K562 (cell line): ENCODE measurements at regions of chr3 and their contacts with region 1.

Region 1: DNA sequence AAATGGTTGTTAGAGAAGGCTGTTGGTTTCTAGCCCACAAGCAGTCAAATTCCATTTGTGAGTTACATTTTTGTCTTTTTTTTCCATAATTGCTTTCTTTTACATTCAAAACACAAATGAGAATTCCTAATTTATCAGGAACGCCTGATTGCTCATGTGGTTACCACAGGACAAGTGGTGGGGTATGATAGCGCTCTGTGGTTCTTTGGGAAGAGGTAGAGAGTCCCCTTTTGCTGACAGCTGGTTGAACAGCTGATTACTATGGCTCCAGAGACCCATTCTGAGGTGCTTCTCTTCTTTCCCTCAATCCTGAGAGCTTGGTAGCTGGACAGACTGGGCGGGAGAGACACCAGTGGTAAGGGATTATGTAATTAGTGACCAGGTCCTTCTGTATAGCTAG is 24.4 kb downstream of the CNOT10 start:
- DNase-seq: peak; percentile 68 to 88 (median 79)
- ATAC-seq: peak; percentile 88
- H3K4me3 ChIP-seq: no peak overlapping the region
- H3K27ac ChIP-seq: peak overlapping the region; percentile 63
- H3K4me1 ChIP-seq: peaks cover 15 to 42% of the 10 kb centered on the region in 2 experiments
- H3K27me3 ChIP-seq: no peaks in the 10 kb centered on the region
- CTCF ChIP-seq: no peak
- EP300 ChIP-seq: peak; percentile 95
- POLR2A ChIP-seq: no peak
- RAD21 ChIP-seq: peak; percentile 18 to 26; a peak in 2 of 4 replicates

Region 2: DNA sequence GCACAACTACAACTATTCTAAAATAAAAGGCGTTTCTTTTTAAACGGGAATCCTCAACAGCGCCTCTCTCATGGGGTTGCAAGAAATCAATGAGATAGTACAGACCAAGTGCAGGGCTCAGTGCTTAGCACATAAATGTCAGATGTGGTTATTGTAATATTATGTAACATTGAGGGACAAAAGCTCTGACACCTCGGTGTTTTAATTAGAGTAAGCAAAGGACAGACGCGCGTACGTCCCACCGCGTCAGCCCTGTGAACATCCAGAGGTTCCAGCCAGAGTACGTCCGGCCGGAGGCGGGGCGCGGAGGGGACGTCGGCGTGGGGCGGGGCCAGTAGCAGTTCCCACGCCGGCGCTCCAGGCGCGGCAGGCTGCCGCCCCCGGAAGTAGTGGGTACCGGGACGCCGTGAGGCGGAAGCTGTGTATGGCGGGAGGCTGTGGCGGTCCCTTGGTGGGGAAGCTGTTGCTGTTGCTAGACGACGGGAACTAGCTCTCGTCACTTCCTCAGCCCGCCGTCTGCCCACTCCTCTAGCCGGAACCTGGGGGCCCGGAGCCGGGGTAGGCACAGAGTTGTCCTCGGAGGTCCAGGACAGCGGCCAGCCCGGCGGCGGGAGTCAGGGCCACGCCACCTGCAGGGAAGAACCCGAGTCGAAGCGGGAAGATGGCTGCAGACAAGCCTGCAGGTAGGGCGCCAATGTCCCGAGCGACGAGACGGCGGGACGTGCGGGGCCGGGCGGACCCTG is 24.4 kb before region 1 on chr3 and contains the start of gene CNOT10:
- CTCF ChIA-PET with region 1: no interaction called
- POLR2A ChIA-PET with region 1: interaction called, 9 read pairs
- in situ Hi-C with region 1: no loop called
- intact Hi-C with region 1: loop called (anchors 2 kb)
- DNase-seq: peak; percentile 96 to 98 (median 96)
- ATAC-seq: peak; percentile 96
- H3K4me3 ChIP-seq: peak within 1 kb of the TSS; percentile 91
- H3K27ac ChIP-seq: peak within 1 kb of the TSS; percentile 82
- H3K4me1 ChIP-seq: peaks cover 11 to 20% of the 10 kb centered on the region in 2 experiments; a peak in 4 of 5 replicates
- H3K27me3 ChIP-seq: no peaks in the 10 kb centered on the region
- CTCF ChIP-seq: peak; percentile 14 to 28 (median 28); a peak in 2 of 6 replicates
- EP300 ChIP-seq: peak; percentile 25; the same call in 1 of the 2 replicates
- POLR2A ChIP-seq: peak; percentile 86
- RAD21 ChIP-seq: no peak; a peak in 2 of 4 replicates
- polyA plus RNA-seq, gene CNOT10: 35.7 to 52.2 TPM

Region 3: GRCh38 chr3:32698506-32698905 is 10.8 kb before region 1 on chr3:
- CTCF ChIA-PET with region 1: no interaction called
- POLR2A ChIA-PET with region 1: interaction called, 12 read pairs
- in situ Hi-C with region 1: no loop called
- intact Hi-C with region 1: no loop called
- DNase-seq: no peak
- ATAC-seq: no peak
- H3K4me3 ChIP-seq: no peak overlapping the region
- H3K27ac ChIP-seq: peak overlapping the region; percentile 13; the same call in 2 of the 3 replicates
- H3K4me1 ChIP-seq: peaks cover 9 to 37% of the 10 kb centered on the region in 2 experiments; a peak in 4 of 5 replicates
- H3K27me3 ChIP-seq: no peaks in the 10 kb centered on the region
- CTCF ChIP-seq: no peak
- EP300 ChIP-seq: no peak
- POLR2A ChIP-seq: no peak
- RAD21 ChIP-seq: no peak

Region 4: DNA sequence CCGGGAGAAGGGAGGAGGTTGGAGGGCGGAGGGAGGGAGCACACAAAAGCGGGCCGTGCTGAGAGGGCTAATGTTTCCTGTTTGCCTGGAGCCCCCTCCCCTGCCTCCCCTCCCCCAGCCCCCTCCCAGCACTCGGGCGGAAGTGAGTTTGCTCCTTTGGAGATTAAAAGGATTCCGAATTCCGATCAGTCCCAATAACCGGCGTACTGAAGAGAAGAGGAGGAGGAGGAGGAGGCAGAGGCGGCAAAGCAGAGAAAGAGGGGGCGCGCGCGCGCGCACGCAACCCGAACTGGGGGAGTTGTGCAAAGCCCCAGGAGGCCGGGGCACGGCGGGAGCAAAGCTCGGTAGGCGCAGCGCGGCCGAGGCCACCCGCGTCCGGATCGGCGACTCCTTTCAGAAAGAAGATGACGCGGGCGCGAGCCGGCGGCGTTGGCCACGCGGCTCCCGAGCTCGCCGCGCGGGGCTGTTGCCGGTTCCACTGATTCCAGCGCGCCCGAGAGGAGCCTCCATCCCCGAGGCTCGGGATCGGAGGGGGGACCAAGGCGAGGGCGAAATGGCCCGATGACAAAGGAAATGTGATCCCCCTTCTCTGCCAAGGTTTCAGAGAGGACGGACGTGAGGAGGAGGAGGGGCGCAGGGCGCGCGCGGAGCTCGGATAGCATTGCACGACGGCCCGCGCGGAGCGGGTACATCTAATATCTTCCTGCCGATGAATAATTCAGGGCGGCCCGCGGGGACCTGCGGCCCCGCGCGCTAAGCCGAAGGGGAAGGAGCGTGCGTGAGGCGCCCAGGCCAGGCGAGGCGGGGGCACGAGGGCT is 107.3 kb after region 1 on chr3:
- CTCF ChIA-PET with region 1: no interaction called
- POLR2A ChIA-PET with region 1: no interaction called
- in situ Hi-C with region 1: no loop called
- intact Hi-C with region 1: no loop called
- DNase-seq: no peak
- ATAC-seq: no peak
- H3K4me3 ChIP-seq: no peak overlapping the region
- H3K27ac ChIP-seq: no peak overlapping the region
- H3K4me1 ChIP-seq: peaks cover 0 to 12% of the 10 kb centered on the region in 2 experiments; a peak in 2 of 5 replicates
- H3K27me3 ChIP-seq: peaks cover 34 to 52% of the 10 kb centered on the region in 2 experiments
- CTCF ChIP-seq: no peak
- EP300 ChIP-seq: no peak
- POLR2A ChIP-seq: no peak
- RAD21 ChIP-seq: no peak